ENCODE measurements at regions of chr15 and their contacts with region 1.

Region 1: DNA sequence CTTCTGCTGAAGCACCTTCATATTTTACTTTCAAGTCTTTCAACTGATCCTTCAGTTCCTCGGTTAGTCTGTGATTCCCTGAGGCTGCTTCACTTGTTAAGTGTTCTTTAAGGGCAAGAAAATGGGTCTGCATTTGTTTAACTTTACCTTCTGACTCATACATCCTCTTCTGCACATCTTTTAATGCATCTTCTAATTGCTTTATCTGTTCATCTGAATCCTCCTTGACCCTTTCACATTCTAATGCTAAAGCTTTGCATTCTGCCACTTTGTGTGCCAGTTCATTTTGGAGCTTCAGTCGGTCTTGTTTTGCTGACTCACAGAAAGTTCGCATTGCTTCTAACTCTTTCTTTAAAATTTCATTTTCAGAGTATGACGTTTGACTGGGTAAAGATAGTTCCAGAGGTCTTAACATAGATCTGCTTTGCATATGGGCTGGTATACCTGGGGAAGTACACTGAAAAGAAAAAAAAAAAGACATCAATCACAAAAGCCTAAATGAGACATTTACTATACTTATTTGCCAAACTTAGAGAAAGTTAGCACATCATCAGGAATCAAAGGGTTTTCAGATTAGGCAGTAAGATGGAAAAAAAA is 94.3 kb downstream of the UACA start:
- DNase-seq: no peak
- ATAC-seq: no peak
- H3K4me3 ChIP-seq: no peak overlapping the region
- H3K27ac ChIP-seq: no peak overlapping the region
- H3K4me1 ChIP-seq: no peaks in the 10 kb centered on the region; the same call in 1 of the 2 replicates
- H3K27me3 ChIP-seq: no peaks in the 10 kb centered on the region
- CTCF ChIP-seq: no peak

Region 2: DNA sequence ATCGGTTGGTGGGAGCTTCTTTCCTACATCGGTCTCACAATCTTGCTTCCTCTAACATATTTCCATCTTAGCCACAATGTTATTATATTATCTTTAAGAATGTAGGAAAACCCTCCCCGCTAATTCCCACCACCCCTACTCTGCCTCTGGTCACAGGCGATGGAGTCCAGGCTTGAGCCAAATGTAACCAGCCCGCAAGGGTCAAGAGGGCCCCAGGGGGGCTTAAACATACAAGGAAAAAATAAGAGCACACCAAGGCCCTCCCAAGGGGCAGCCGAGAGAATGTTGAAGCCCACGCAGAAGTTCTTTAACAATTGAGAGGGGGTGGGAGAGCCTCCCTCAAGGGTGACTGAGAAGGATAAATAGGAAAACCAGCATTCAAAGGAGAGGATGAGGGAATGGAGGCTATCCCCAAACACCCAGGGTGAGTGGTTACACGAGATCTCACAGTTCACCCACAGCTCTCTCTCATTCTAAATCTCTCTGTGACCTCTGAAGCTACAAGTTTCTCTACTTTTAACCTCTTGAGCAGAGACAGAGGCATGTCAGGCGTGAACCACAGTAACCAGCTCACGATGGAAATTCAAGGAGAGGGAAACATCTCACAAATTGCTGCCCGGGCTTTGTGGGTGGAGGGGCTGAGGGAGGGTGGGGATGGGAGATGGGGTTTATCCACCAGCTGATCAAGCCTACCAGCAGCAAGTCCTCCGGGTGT is 125.6 kb after region 1 on chr15:
- CTCF ChIA-PET with region 1: no interaction called
- POLR2A ChIA-PET with region 1: interaction called, 13 read pairs
- in situ Hi-C with region 1: no loop called
- intact Hi-C with region 1: no loop called
- DNase-seq: no peak
- ATAC-seq: peak; percentile 49
- H3K4me3 ChIP-seq: 0 out of 4 replicates have a peak overlapping the region, but pooled peaks of 1 of the 2 experiments have one; percentile 19
- H3K27ac ChIP-seq: peak overlapping the region; percentile 100
- H3K4me1 ChIP-seq: peaks cover 77% of the 10 kb centered on the region
- H3K27me3 ChIP-seq: no peaks in the 10 kb centered on the region
- CTCF ChIP-seq: no peak

Measured in Panc1 (cell line).